ENCODE measurements at regions of chr6 and their contacts with region 1.

Region 1: DNA sequence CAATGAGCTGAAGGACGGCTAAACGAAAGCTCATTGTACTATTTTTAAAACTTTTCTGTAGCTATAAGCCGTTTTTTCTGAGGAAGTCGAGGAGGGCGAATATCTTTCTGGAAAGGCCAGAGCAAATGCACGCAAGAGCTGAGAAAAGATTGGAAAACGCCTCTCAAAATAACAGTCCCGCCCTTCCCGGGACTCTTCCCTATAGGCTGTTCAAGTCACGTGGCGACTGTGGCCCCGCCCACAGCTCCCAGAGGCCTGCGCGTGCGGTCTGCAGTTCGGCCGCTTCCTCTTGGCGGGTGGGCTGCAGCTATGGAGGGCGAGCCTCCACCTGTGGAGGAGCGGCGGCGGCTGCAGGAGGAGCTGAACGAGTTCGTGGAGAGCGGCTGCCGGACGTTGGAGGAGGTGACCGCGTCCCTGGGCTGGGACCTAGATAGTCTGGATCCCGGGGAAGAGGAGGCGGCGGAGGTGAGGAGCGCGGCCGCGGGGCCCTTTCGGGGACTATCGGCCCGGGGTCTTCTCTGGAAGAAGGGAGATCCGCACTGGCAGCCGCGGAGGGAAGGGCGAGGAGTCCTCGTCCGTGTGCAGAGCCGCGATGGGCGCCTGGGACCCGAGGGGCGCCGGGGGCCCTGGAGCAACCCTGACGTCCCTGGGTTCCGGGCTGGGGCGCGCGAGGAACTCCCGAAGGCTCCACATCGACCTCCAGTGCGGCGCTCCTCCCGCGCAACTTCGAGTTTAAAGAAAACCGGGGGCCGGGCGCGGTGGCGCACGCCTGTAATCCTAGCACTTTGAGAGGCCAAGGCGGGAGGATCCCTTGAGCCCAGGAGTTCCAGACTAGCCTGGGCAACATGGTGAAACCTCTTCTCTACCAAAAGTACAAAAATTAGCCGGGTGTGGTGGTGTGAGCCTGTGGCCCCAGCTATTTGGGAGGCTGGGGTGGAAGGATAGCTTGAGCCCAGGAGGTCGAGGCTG is at the start of gene SNRNP48:
- ATAC-seq: peak; percentile 96 to 100 (median 100)
- H3K4me3 ChIP-seq: peak within 1 kb of the TSS; percentile 58 to 88 (median 81)
- H3K27ac ChIP-seq: peak within 1 kb of the TSS in 1 of 2 donors; percentile 59
- H3K4me1 ChIP-seq: peaks cover 10 to 15% of the 10 kb centered on the region in 2 donors
- total RNA-seq, gene SNRNP48: 8.5 to 16.3 (median 9.5) TPM

Region 2: GRCh38 chr6:7282097-7282906 is 307.9 kb before region 1 on chr6:
- in situ Hi-C with region 1: loop called in 1 of 9 experiments (anchors 25 kb)
- ATAC-seq: no peak
- H3K4me3 ChIP-seq: no peak overlapping the region
- H3K27ac ChIP-seq: no peak overlapping the region
- H3K4me1 ChIP-seq: no peaks in the 10 kb centered on the region

Region 3: GRCh38 chr6:7401075-7401474 is 189.2 kb before region 1 on chr6:
- in situ Hi-C with region 1: loop called in 2 of 9 experiments (anchors 10 to 25 kb)
- ATAC-seq: peak in 5 of 8 experiments; percentile 11 to 88 (median 64)
- H3K4me3 ChIP-seq: no peak overlapping the region
- H3K27ac ChIP-seq: no peak overlapping the region
- H3K4me1 ChIP-seq: no peaks in the 10 kb centered on the region

Region 4: GRCh38 chr6:7424967-7425807 is 165.0 kb before region 1 on chr6:
- in situ Hi-C with region 1: loop called in 1 of 9 experiments (anchors 25 kb)
- ATAC-seq: peak in 5 of 8 experiments; percentile 37 to 75 (median 43)
- H3K4me3 ChIP-seq: no peak overlapping the region
- H3K27ac ChIP-seq: no peak overlapping the region
- H3K4me1 ChIP-seq: no peaks in the 10 kb centered on the region